Caco-2 (cell line): ENCODE measurements at regions of chr4 and their contacts with region 1.

Region 1: DNA sequence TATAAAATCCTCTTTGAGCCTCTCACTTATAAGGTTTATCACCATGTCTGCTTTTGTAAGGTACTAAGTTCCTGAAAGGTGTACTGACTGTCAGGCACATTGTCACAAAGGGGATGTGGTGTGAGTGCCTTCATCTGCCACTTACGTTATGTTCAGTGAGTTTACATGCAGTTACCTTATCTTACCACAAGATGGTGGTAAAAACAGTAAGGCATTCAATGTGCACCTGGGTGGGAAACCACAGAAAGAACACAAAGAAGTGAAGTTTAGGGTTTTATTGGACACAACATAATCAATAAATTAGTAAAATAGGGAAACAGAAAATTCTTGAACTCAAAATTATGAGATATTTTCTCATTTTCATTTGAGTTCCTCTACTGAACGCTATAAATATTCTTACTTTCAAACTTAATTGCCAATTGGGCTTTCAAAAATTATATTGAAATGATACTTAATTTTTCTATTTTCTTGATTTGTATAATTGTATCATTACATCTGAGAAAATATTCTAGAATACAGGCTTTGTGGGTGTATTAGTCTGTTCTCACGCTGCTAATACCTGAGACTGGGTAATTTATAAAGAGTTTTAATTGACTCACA is 650.8 kb downstream of the PCDH7 start:
- DNase-seq: peak in 1 of 2 experiments; percentile 58
- H3K4me3 ChIP-seq: no peak overlapping the region
- H3K4me3 Mint-ChIP-seq: no peak overlapping the region
- H3K27ac Mint-ChIP-seq: no peak overlapping the region
- H3K4me1 ChIP-seq: 0 out of 2 replicates have a peak, but pooled peaks cover 1% of the 10 kb centered on the region
- H3K4me1 Mint-ChIP-seq: peaks cover 2% of the 10 kb centered on the region
- H3K27me3 ChIP-seq: no peaks in the 10 kb centered on the region
- H3K27me3 Mint-ChIP-seq: no peaks in the 10 kb centered on the region
- CTCF ChIP-seq: peak; percentile 56 to 73

Region 2: DNA sequence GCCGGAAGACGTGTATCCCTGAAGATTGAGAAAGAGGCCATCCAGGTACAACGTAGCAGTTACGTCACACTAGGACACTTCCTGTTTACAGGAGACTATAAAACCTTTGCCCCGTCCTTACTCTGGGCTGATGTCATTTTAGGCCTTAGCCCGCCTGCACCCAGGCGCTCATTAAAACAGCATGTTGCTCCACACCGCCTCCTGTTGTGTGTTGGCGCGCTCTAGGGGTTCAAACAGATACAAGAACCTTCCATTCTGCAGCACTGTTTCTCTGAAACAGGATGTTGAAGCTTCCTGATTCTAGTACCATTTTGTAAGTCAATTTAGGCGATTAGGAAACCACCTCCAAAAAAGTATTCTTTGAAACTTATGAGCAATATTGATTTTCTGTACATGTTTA is 71.3 kb after region 1 on chr4:
- CTCF ChIA-PET with region 1: interaction called, 3 read pairs
- POLR2A ChIA-PET with region 1: no interaction called
- intact Hi-C with region 1: loop called (anchors 1 kb)
- DNase-seq: peak; percentile 23 to 40
- H3K4me3 ChIP-seq: no peak overlapping the region
- H3K4me3 Mint-ChIP-seq: no peak overlapping the region
- H3K27ac Mint-ChIP-seq: no peak overlapping the region
- H3K4me1 ChIP-seq: no peaks in the 10 kb centered on the region
- H3K4me1 Mint-ChIP-seq: no peaks in the 10 kb centered on the region
- H3K27me3 ChIP-seq: no peaks in the 10 kb centered on the region
- H3K27me3 Mint-ChIP-seq: no peaks in the 10 kb centered on the region
- CTCF ChIP-seq: no peak

Region 3: DNA sequence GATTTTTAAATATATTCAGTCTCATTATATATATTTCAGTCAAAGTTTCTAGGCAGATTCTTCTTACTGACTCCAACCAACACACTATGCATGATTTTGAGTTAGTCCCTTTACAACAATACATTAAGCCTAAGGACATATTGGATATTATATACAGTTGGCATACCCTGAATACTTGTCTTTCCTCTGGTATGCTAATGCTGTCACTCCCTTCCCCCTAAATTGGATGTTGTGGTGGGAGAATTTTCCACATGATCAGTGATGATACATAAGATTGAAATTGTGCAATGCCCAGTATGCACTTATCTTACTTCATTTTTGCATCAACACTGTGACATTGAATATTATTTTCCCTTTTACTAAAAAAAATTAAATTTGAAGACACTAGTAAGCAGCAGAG is 284.4 kb after region 1 on chr4:
- CTCF ChIA-PET with region 1: no interaction called
- POLR2A ChIA-PET with region 1: no interaction called
- intact Hi-C with region 1: loop called (anchors 5 kb)
- DNase-seq: no peak
- H3K4me3 ChIP-seq: no peak overlapping the region
- H3K4me3 Mint-ChIP-seq: no peak overlapping the region
- H3K27ac Mint-ChIP-seq: no peak overlapping the region
- H3K4me1 ChIP-seq: no peaks in the 10 kb centered on the region
- H3K4me1 Mint-ChIP-seq: no peaks in the 10 kb centered on the region
- H3K27me3 ChIP-seq: no peaks in the 10 kb centered on the region
- H3K27me3 Mint-ChIP-seq: no peaks in the 10 kb centered on the region
- CTCF ChIP-seq: no peak

Region 4: DNA sequence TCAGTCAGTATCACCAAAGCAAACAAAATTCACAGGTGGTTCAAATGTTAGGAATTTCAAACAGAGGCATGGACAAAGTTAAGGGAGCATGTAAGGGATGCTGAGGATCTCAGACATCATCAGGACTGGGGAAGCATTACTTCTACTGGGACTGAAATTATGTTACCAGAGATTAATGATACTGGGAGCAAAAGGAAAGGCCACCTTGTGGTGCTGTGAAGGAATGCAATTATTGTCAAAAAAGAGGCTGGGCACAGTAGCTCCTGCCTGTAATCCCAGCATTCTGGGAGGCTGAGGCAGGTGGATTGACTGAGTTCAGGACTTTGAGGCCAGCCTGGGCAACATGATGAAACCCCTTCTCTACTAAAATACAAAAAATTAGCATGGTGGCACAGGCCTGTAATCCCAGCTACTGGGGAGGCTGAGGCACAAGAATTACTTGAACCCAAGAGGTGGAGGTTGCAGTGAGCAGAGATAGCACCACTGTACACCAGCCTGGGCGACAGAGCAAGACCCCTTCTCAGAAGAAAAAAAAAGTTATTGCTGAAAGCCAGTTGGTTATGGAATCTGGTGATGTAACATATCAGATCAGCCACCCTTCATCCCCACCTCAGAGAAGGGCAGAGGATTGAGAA is 303.5 kb after region 1 on chr4:
- CTCF ChIA-PET with region 1: no interaction called
- POLR2A ChIA-PET with region 1: no interaction called
- intact Hi-C with region 1: loop called (anchors 1 kb)
- DNase-seq: peak; percentile 29 to 35
- H3K4me3 ChIP-seq: no peak overlapping the region
- H3K4me3 Mint-ChIP-seq: no peak overlapping the region
- H3K27ac Mint-ChIP-seq: no peak overlapping the region
- H3K4me1 ChIP-seq: no peaks in the 10 kb centered on the region
- H3K4me1 Mint-ChIP-seq: no peaks in the 10 kb centered on the region
- H3K27me3 ChIP-seq: no peaks in the 10 kb centered on the region
- H3K27me3 Mint-ChIP-seq: no peaks in the 10 kb centered on the region
- CTCF ChIP-seq: peak; percentile 43 to 46

Region 5: DNA sequence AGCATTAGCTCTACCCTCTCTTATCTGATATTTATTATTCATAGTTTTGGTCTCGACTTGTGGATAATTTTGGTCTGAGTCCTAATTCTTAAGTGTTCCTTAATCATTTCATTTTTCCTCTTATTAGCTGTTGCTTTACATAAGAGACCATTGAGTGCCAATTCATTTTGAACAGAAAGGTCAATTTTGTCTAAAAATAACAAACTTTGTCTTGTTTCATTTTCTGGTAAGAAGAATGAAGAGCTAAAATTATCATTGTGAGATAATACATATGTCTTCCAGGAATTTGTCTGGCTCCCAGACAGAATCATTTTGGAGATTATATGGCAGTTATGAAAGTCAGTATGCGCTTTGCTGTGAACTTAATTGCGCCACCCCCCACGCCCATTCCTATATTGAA is 821.0 kb after region 1 on chr4:
- CTCF ChIA-PET with region 1: no interaction called
- POLR2A ChIA-PET with region 1: no interaction called
- intact Hi-C with region 1: no loop called
- DNase-seq: no peak
- H3K4me3 ChIP-seq: no peak overlapping the region
- H3K4me3 Mint-ChIP-seq: no peak overlapping the region
- H3K27ac Mint-ChIP-seq: no peak overlapping the region
- H3K4me1 ChIP-seq: no peaks in the 10 kb centered on the region
- H3K4me1 Mint-ChIP-seq: no peaks in the 10 kb centered on the region
- H3K27me3 ChIP-seq: no peaks in the 10 kb centered on the region
- H3K27me3 Mint-ChIP-seq: no peaks in the 10 kb centered on the region
- CTCF ChIP-seq: no peak